ENCODE measurements at regions of chr12 and their contacts with region 1.

Region 1: DNA sequence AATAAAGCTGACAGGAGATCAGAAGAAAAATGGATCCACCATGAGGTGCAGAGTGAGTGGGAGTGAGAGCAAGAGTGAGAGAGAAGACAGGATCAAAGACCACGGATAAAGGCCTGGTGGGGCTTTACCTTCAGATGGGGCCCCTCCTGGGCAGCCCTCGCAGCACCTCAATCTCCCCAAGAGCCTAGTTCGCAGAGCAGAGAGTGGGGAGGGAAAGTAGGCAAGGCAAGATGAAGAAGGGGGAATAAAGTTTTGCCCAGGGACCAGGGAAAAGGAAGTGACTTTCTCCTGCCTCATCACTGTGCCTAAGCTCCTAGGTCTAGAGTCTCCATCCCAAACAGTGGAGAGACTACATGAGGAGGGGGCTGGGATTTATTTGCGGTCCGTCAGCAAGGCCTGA is 10.3 kb downstream of the OR10P1 start:
- DNase-seq: no peak
- H3K4me3 Mint-ChIP-seq: no peak overlapping the region
- H3K27ac Mint-ChIP-seq: peak overlapping the region; percentile 17
- H3K4me1 Mint-ChIP-seq: peaks cover 26% of the 10 kb centered on the region
- H3K27me3 Mint-ChIP-seq: no peaks in the 10 kb centered on the region

Region 2: GRCh38 chr12:55659486-55660385 is 12.7 kb after region 1 on chr12:
- CTCF ChIA-PET with region 1: interaction called, 19 read pairs
- POLR2A ChIA-PET with region 1: no interaction called
- DNase-seq: no peak
- H3K4me3 Mint-ChIP-seq: no peak overlapping the region
- H3K27ac Mint-ChIP-seq: no peak overlapping the region
- H3K4me1 Mint-ChIP-seq: no peaks in the 10 kb centered on the region
- H3K27me3 Mint-ChIP-seq: peaks cover 14% of the 10 kb centered on the region

Measured in activated CD4-positive, alpha-beta T cell treated with anti-CD3 and anti-CD28 coated beads, Interleukin-2, amount 10 ng/mL, durations not matched to agents 7 days and 5 days (primary cell).